Activated B cell treated with CpG ODN at 0.5 μM for 24 hours (primary cell): ENCODE measurements at regions of chr13 and their contacts with region 1.

Region 1: DNA sequence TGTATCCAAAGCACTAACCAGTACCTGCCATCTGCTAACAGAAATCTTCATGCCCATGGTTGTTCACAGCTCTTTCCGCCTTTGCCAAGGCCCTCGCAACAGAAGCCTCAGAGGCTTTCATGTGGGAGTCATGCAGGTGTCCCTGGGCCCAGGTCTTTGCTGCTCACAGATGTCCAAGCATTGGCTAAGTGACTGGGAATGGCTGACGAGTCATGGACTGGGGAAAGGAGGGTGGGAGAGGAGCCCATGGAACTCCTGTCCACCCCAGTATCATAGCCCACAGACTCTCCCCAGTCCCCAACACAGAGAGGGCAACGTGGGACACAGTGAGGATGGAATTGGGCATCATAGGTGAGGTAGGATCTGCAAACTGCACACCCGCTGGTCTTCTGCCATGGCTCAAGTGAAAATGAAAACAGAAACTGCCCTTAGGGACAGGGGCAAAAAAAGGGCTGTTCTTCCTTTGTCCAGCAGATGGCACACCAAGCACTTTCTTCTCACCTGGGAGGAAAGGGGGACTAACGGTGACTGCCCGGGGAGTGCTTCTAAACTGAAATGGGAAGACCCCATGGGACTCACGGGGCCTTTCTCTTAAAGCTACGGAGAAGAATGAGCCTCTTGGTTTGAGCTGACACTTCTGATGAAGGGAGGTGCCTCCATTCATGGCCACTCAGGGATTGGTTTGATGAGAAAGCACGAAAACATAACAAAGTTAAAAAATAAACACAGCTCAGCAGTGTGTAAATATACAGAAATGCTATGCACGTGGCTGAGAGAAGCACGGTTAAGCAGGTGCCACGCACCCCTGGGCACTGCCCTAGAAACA is 11.1 kb upstream of the DHRS12 start:
- DNase-seq: peak; percentile 56
- ATAC-seq: peak; percentile 84
- H3K4me3 Mint-ChIP-seq: peak overlapping the region; percentile 57
- H3K27ac Mint-ChIP-seq: peak overlapping the region; percentile 56
- H3K4me1 Mint-ChIP-seq: peaks cover 44% of the 10 kb centered on the region
- H3K27me3 Mint-ChIP-seq: no peaks in the 10 kb centered on the region
- CTCF ChIP-seq: peak; percentile 46

Region 2: DNA sequence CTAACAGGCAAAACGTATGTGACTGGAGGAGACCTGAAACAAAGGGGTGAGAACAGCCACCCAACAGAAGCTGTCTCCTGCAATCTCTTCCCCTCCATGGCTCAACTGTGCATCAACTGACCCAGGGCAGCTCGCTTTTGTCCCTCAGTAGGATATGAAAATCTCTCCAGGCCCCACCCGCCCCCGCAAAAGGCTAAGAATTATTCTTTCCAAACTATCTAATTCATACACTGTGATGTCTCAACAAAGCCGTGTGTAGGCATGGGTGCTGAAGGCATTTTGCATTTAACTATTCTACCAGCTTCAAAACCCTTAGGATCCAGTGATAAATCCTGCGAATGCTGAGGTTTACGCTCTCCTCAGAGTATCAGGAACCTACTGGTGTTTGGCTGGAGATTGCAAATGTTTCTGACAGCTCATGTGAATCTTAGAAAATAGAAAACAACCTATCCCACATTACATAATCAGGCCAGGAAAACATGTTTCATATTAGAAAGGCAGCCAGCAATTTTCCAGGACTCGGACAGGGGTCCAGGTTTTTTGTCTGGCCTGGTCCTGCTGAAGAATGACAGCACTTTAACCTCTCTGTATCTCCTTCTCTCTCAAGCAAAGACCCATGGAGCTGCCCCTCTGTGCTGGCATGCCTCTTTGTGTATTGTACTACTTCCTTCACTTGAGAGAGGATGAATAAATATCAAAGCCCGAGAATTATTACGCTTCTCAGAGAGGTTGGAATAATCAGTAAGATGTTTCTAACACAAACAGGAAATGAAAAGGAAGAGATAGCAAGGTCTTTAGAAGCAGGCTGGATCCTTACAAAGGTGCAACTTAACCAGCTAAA is 28.4 kb before region 1 on chr13:
- CTCF ChIA-PET with region 1: no interaction called
- POLR2A ChIA-PET with region 1: no interaction called
- intact Hi-C with region 1: no loop called
- DNase-seq: no peak
- ATAC-seq: no peak
- H3K4me3 Mint-ChIP-seq: no peak overlapping the region
- H3K27ac Mint-ChIP-seq: no peak overlapping the region
- H3K4me1 Mint-ChIP-seq: peaks cover 8% of the 10 kb centered on the region
- H3K27me3 Mint-ChIP-seq: no peaks in the 10 kb centered on the region
- CTCF ChIP-seq: no peak

Region 3: DNA sequence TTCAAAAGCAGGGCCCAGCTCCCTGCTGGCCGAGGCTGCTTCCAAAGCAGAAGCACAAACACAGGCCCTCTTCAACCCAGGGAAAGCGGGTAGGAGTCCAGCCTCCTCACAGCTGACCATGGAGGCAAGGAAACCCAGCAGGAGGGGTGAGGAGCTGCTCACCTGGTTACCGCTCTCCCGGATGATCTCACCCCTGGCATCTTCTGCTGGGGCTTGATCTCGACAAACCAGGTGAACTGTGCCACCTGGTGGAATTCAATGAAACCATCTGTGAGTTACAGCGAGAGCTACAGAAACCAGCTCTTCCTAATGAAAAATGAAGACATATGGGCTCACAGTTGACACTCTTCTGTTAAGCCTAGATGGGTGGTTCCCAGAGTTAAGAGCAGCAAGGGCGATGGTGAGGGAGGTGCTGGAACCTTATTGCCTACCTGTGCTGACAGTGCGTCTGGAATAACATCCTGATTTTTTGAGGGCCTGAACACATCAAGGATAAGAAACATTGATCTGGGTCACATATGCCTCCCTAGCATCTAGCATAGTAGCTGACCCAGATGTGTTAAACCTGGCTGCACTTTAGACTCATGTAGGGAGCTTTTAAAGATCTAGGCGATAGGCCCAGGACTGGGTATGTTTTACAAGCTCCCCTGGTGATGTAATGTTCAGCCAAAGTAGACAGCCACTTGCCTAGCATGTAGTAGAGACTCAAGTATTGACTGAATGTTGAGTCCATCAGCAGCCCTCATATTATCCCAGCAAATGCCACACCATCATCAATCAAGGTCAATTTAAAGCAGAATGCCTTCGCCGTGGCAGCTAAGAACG is 17.2 kb before region 1 on chr13:
- CTCF ChIA-PET with region 1: interaction called, 11 read pairs
- POLR2A ChIA-PET with region 1: interaction called, 6 read pairs
- intact Hi-C with region 1: no loop called
- DNase-seq: no peak
- ATAC-seq: peak; percentile 45
- H3K4me3 Mint-ChIP-seq: no peak overlapping the region
- H3K27ac Mint-ChIP-seq: no peak overlapping the region
- H3K4me1 Mint-ChIP-seq: peaks cover 47% of the 10 kb centered on the region
- H3K27me3 Mint-ChIP-seq: no peaks in the 10 kb centered on the region
- CTCF ChIP-seq: no peak

Region 4: DNA sequence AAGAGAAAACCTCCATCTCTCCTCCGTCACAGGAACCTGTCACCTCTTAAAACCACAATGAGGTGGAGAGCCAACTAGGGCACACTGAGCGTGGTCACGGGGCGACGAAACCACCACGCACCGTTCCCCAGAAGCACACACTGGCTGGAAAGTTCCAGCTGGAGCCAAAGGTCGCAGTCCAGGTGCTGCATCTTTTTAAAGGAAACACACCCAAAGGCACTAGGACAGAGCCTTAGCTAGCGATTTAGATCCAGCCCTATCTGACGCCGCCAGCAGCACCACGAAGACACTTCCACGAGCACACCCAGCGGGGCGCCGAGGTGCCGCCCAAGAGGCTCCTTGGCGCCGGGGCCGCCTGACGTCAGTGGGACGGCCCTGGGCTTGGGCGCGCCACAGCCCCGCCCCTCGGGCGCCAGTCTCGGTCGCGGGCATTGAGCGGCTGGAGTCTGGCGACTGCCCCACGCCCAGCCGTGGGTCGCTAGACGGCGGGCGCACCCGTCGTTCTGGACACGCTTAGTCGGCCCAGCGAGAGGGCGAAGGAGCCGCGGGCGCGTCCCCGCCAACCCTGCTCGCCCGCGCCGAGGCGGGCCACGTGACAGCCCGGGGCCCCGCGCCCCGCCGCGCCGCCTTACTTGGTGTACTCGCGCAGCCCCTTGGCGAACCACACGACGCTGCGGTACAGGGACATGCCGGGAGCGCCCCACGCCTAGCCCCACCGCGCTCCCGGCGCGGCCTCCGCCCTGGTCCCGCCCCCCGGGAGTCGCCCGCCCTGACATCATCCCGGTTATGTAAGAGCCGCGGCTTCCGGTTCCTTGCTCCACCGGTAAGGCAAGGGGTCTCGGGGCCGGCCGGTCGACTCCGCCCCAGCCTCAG is 11.4 kb before region 1 on chr13 and contains the start of gene DHRS12:
- CTCF ChIA-PET with region 1: interaction called, 19 read pairs
- POLR2A ChIA-PET with region 1: interaction called, 6 read pairs
- intact Hi-C with region 1: loop called (anchors 1 kb)
- DNase-seq: peak; percentile 84
- ATAC-seq: peak; percentile 81
- H3K4me3 Mint-ChIP-seq: peak within 1 kb of the TSS; percentile 92
- H3K27ac Mint-ChIP-seq: peak within 1 kb of the TSS; percentile 99
- H3K4me1 Mint-ChIP-seq: peaks cover 47% of the 10 kb centered on the region
- H3K27me3 Mint-ChIP-seq: no peaks in the 10 kb centered on the region
- CTCF ChIP-seq: no peak
- total RNA-seq, gene DHRS12: 11.6 and 14.1 TPM in 2 replicates

Region 5: DNA sequence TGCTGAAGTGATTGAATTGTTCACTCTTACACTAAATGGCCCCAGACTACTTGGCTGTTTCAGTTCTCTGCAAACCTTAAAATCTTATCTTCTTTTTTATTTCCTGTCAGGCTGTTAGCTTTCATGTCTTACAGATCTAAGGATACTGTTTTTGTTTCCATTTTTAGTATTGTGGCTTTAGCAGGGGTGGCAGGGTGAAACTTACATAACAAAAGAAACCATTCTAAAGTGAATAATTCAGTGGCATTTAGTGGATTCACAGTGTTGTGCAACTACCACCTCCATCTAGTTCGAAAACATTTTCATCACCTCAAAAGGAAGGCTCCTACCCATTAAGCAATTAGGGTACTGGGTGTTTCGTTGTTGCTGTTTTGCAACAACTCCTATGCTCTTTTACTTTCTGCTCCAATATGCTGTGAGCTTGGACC is 10.1 kb after region 1 on chr13:
- CTCF ChIA-PET with region 1: interaction called, 28 read pairs
- POLR2A ChIA-PET with region 1: no interaction called
- intact Hi-C with region 1: no loop called
- DNase-seq: no peak
- ATAC-seq: no peak
- H3K4me3 Mint-ChIP-seq: peak overlapping the region; percentile 15
- H3K27ac Mint-ChIP-seq: no peak overlapping the region
- H3K4me1 Mint-ChIP-seq: peaks cover 79% of the 10 kb centered on the region
- H3K27me3 Mint-ChIP-seq: peaks cover 5% of the 10 kb centered on the region
- CTCF ChIP-seq: no peak

Region 6: DNA sequence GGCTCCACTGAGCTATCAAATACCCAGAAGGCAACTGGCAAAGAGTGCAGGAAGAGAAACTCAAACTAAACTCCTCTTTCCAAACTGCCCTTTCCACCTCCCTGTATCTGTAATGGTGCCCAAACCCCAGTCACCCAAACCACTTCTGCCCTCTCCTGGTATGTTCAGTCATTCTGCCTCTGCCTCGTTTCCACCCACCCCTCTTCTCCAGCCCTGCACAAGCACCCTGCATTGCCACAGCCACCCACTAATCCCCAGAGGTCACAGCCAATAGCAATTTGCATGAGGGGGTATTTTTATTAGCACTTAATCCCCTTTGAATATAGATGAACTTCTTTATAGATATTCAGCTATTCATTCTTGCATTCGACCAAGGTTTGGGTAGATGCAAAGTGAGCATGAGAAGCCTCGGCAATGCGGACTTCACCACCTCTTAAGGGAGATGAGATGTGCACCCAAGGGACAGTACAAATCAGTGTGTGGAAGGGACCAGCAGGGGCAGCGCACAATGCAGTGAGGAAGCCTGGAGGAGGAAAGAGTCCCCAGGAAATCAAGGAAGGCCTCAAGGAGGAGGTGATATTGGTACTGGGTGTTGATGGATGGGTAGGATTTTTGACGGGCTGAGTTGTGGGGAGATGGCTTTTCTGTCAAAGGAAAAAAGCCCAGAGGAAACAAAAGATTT is 17.6 kb after region 1 on chr13:
- CTCF ChIA-PET with region 1: interaction called, 56 read pairs
- POLR2A ChIA-PET with region 1: interaction called, 6 read pairs
- intact Hi-C with region 1: loop called (anchors 1 kb)
- DNase-seq: no peak
- ATAC-seq: peak; percentile 97
- H3K4me3 Mint-ChIP-seq: no peak overlapping the region
- H3K27ac Mint-ChIP-seq: no peak overlapping the region
- H3K4me1 Mint-ChIP-seq: peaks cover 31% of the 10 kb centered on the region
- H3K27me3 Mint-ChIP-seq: peaks cover 7% of the 10 kb centered on the region
- CTCF ChIP-seq: no peak

Region 7: DNA sequence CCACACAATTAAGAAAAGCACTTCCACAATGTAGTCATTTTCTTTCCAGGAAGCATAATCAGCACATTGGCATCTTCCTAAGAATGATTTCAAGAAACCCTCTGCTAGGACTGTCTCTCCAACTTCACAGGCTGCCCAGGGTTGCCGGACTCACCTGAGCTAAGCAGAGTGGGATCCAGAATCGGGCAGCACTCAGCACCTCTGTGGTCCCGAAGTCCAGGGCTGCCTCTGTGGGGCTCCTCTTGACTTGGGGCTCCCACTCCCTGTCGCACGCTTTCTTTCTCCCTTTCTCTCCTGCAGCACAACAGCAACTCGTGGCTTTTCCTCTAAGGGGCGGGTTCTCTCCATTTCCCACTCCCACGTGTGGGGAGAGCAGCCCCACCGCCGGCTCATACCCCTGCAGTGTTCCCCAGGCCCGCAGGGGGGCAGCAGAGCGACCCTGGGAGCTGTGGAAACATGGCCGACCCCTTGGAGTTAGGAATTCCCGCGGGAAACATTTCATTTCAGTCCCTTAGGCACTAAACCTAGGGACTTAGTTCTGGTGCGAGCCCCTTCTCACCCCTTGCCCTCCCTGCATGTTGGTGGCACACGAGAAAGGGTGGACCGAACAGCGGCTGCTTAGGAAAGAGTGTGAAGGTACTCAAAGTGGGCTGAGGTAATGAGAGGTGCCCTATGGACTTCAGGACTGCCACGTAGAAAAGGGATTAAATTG is 30.0 kb after region 1 on chr13 and contains the start of gene TMEM272:
- CTCF ChIA-PET with region 1: interaction called, 7 read pairs
- POLR2A ChIA-PET with region 1: no interaction called
- intact Hi-C with region 1: loop called (anchors 1 kb)
- DNase-seq: peak; percentile 37
- ATAC-seq: peak; percentile 78
- H3K4me3 Mint-ChIP-seq: no peak within 1 kb of the TSS
- H3K27ac Mint-ChIP-seq: no peak within 1 kb of the TSS
- H3K4me1 Mint-ChIP-seq: peaks cover 2% of the 10 kb centered on the region
- H3K27me3 Mint-ChIP-seq: peaks cover 10% of the 10 kb centered on the region
- CTCF ChIP-seq: no peak
- total RNA-seq, gene TMEM272: not detected in 2 replicates

Region 8: DNA sequence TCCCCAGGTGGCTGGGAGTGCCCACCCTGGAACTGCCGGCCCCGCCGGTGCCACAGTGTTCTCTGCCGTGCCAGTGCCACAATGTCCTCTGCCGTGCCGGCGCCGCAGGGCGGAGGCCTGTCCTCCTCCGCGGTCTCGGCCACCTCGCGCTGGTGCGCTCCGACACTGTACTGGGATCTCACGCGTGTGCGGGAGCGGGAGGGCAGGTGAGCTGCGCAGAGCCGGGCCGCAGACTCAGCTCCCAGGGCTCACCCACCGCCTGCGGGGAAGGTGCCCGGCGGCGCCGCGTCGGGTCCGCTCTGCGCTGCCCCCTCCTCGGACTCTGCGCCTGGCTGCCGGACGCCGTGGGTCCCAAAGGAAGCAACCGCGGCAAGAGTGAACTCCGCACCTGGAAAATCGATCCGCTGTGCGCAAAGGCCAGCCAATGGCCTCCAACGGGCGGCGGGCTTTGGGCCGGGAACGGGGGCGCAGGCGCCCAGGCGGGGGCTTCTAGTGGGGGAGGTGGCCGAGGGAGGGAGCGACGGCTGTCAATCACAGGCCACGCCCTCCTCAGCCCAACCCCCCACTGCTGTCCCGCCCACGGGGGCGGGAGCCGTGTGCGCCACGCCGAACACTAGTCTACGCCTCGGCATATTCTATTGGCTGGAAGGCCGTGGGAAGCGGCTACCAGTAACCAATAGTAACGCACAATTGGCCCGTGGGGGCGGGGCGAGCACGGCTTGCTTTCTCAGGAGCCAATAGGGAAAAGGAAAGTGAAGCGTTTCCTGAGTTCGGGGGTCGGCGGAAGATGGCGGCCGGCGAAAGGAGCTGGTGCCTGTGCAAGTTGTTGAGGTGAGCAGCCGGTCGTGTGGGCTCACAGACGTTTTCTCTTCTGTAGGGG is 196.8 kb after region 1 on chr13 and contains the start of gene ALG11:
- CTCF ChIA-PET with region 1: no interaction called
- POLR2A ChIA-PET with region 1: interaction called, 3 read pairs
- intact Hi-C with region 1: loop called (anchors 2 kb)
- DNase-seq: peak; percentile 98
- ATAC-seq: peak; percentile 99
- H3K4me3 Mint-ChIP-seq: peak within 1 kb of the TSS; percentile 99
- H3K27ac Mint-ChIP-seq: peak within 1 kb of the TSS; percentile 89
- H3K4me1 Mint-ChIP-seq: peaks cover 19% of the 10 kb centered on the region
- H3K27me3 Mint-ChIP-seq: peaks cover 16% of the 10 kb centered on the region
- CTCF ChIP-seq: no peak
- total RNA-seq, gene ALG11: 31.8 and 36.9 TPM in 2 replicates